Cardiac septum (tissue), 1 donor: ENCODE measurements at regions of chrX and their contacts with region 1.

Region 1: GRCh38 chrX:65821721-65822496 is 154.5 kb downstream of the MSN start:
- DNase-seq: no peak

Region 2: DNA sequence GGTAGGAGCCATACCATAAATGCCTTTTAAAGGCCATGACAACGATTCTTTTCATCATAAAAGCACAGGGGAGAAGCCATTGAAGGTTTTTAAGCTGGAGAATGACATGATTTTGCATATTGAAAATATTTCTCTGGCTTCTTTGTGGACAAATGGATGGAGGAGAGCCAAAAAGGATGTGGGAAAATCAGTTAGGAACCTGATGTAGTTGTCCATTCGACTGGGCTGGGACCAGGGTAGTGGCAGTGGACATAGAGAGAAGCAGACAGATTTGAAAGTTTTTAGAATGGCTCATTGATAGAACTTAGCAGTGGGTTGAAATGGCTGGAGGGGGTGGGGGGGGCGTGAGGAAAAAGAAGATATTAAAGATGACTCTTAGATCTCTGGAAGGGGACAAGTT is 174.1 kb before region 1 on chrX:
- intact Hi-C with region 1: no loop called
- DNase-seq: no peak

Region 3: DNA sequence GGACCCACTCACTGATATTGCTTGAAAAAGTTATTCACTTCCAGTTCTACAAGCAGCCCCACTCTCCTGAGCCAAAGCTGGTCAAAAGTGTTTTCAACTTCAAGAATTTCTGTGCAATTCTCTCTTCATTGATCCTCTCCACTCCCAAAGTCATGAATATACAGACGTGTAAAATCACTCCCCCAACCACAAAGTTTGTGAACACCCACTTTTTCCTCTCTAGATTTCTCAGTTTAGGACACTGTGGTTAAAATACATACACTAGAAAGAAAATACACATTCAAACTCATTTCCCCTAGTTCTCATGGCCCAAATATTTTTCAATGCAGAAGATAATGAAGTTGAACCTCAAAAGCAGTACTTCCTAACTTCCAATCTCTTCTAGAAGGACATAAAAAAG is 38.2 kb before region 1 on chrX:
- intact Hi-C with region 1: no loop called
- DNase-seq: no peak

Region 4: GRCh38 chrX:65879977-65880799 is 58.3 kb after region 1 on chrX:
- intact Hi-C with region 1: loop called (anchors 5 kb)
- DNase-seq: no peak

Region 5: DNA sequence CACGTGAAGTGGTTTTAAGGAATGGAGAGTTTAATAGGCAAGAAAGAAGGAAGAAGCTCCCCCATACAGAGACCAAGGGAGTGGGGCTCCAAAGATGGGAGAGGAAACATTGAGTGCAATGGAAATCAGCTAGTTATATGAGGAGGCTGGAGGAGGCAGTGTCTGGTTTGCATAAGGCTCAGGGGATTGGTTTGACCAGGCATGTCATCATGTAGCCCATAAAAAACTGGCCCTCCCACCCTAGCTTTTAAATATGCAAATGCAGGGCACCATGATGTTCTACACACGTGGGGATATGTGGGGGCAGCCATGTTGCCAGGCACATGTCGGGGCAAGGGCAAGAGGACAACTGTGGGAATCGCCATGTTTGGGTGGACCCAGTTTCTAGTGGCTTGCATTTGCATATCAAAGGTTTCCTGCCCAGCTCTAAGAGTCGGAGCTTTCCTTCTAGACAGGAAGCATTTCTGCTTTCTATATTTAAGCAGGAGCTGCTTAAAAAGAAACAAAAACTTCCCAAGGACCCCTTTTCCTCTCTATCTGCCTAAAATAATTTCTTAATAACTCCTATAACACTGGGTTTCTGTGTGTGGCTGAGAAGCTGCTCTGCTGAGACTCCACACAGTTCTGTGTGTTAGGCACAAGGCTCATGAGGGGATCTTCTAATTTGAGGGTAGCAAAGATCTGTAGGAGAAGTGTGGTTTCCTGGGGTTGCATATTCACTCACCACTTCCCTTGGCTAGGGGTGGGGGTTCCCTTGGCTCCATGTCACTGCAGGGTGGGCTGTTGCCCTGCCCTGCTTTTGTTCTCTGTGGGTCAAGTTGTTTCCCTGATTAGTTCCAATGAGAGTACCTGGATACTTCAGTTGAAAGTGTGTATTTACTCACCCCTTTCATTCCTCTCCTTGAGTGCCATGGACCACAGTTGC is 104.4 kb after region 1 on chrX:
- intact Hi-C with region 1: no loop called
- DNase-seq: no peak

Region 6: GRCh38 chrX:66015152-66015831 is 193.4 kb after region 1 on chrX:
- intact Hi-C with region 1: no loop called
- DNase-seq: peak; percentile 80